Aorta (tissue), 5 donors: ENCODE measurements at regions of chr6 and their contacts with region 1.

Region 1: GRCh38 chr6:46521464-46521971 is 30.3 kb upstream of the RCAN2 start:
- DNase-seq: no peak
- ATAC-seq: peak; percentile 84
- H3K4me3 ChIP-seq: no peak overlapping the region
- H3K27ac ChIP-seq: peak overlapping the region in 1 of 2 donors; percentile 93
- H3K4me1 ChIP-seq: peaks cover 0 to 11% of the 10 kb centered on the region in 2 donors
- H3K27me3 ChIP-seq: no peaks in the 10 kb centered on the region

Region 2: DNA sequence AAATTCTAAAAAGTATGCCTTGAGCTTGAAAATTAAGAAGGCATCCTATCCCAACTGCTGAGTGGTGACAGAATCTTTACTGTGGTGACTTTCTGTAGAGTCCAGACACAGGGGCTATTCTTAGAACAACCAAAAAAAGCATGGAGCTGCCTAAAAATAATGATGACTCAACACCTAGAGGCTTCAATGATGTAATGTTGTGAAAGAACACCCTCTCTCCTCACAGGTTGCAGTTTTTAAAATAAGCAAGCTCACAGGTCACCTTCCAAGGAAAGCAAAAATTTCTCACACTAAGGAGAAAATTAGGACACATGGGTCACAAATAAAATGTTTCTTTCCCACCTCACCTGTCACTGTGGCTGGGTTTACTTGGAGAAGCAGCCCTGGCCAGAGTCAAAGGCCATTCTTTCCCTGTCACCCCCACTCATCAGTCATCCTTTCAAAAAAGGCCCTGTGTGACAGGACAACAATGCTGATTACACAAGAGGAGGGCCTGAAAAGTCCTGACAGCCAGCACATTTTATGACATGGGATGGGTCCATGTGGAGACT is 83.8 kb before region 1 on chr6:
- intact Hi-C with region 1: loop called (anchors 5 kb)
- DNase-seq: no peak
- ATAC-seq: peak; percentile 72
- H3K4me3 ChIP-seq: no peak overlapping the region
- H3K27ac ChIP-seq: peak overlapping the region; percentile 51 to 96
- H3K4me1 ChIP-seq: peaks cover 3 to 8% of the 10 kb centered on the region in 2 donors
- H3K27me3 ChIP-seq: no peaks in the 10 kb centered on the region

Region 3: DNA sequence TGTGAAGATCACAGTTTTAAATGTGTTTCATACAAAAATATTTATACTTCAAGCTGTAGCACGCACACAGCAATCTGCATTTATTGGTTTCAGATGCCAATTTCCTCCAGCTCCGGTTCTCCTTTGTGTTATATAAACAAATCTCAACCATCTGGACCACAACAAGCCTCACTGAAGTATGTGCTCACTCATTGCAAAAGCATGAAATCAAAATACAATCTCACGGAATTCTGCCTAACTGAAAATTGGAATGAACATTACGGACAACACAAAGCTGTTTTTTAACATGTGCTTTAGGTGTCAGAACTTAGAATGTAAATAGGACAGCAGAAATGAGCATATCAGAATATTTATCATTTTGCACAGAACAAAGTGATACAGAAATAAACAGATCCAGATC is 68.3 kb before region 1 on chr6:
- intact Hi-C with region 1: loop called in 1 of 2 experiments (anchors 5 kb)
- DNase-seq: no peak
- ATAC-seq: no peak
- H3K4me3 ChIP-seq: peak overlapping the region in 1 of 2 donors; percentile 14
- H3K27ac ChIP-seq: peak overlapping the region; percentile 60 to 83
- H3K4me1 ChIP-seq: peaks cover 5 to 14% of the 10 kb centered on the region in 2 donors
- H3K27me3 ChIP-seq: no peaks in the 10 kb centered on the region

Region 4: DNA sequence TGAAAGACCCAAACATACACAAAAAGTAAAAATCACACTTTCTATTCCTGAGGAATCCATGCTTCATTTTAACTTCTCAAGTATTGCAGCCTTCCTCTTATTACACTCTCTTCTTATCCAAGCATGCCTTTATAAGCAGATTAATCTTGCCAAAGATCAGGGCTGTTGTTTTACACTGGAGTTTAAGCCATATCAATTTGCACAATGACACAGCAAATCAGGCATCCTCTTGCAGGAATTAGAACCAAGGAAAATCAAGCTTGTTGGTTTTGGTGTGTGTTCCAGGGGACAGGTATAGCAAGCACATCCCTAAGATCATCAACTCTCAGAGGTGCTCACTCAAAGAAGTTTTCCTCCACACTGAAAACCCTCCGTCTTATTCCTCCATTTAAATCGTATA is 61.6 kb after region 1 on chr6:
- intact Hi-C with region 1: loop called in 1 of 2 experiments (anchors 10 kb)
- DNase-seq: no peak
- ATAC-seq: no peak
- H3K4me3 ChIP-seq: no peak overlapping the region
- H3K27ac ChIP-seq: peak overlapping the region; percentile 28 to 36
- H3K4me1 ChIP-seq: peaks cover 0 to 8% of the 10 kb centered on the region in 2 donors
- H3K27me3 ChIP-seq: no peaks in the 10 kb centered on the region

Region 5: DNA sequence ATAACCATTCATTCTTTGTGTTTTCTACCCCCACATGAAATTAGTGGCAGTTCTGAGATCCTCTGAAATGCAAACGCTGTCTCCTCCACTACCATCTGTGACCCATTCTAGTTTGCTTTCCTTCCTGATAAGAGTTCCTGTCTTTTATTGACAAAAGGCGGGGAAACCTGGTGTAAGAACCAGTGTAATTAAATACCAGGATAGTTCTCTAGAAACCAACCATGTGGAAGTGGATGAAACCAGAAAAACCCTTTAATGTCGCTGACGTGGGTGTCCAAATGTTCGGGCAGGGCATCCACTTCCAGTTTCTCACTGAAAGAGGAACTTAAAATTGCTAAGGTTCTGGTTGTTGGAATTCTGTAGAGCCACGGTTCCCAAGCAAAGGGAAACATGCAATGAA is 709.1 kb after region 1 on chr6:
- intact Hi-C with region 1: no loop called
- DNase-seq: no peak
- ATAC-seq: no peak
- H3K4me3 ChIP-seq: no peak overlapping the region
- H3K27ac ChIP-seq: no peak overlapping the region
- H3K4me1 ChIP-seq: no peaks in the 10 kb centered on the region
- H3K27me3 ChIP-seq: no peaks in the 10 kb centered on the region